ENCODE measurements at regions of chr4 and their contacts with region 1.

Region 1: GRCh38 chr4:82373816-82374625 is at the start of gene HNRNPD:
- DNase-seq: peak; percentile 98
- ATAC-seq: peak; percentile 91
- H3K4me3 Mint-ChIP-seq: peak within 1 kb of the TSS; percentile 87
- H3K27ac Mint-ChIP-seq: peak within 1 kb of the TSS; percentile 100
- H3K4me1 Mint-ChIP-seq: peaks cover 26% of the 10 kb centered on the region
- H3K27me3 Mint-ChIP-seq: no peaks in the 10 kb centered on the region
- CTCF ChIP-seq: no peak
- total RNA-seq, gene HNRNPD: 384 to 403 TPM

Region 2: GRCh38 chr4:82352913-82353366 is 21.1 kb before region 1 on chr4:
- CTCF ChIA-PET with region 1: interaction called, 4 read pairs
- POLR2A ChIA-PET with region 1: interaction called, 32 read pairs
- intact Hi-C with region 1: no loop called
- DNase-seq: no peak
- ATAC-seq: peak; percentile 61
- H3K4me3 Mint-ChIP-seq: no peak overlapping the region
- H3K27ac Mint-ChIP-seq: peak overlapping the region; percentile 85
- H3K4me1 Mint-ChIP-seq: peaks cover 60% of the 10 kb centered on the region
- H3K27me3 Mint-ChIP-seq: no peaks in the 10 kb centered on the region
- CTCF ChIP-seq: no peak

Region 3: GRCh38 chr4:82360298-82361177 is 13.5 kb before region 1 on chr4:
- CTCF ChIA-PET with region 1: interaction called, 25 read pairs
- POLR2A ChIA-PET with region 1: interaction called, 32 read pairs
- intact Hi-C with region 1: no loop called
- DNase-seq: no peak
- ATAC-seq: peak; percentile 59
- H3K4me3 Mint-ChIP-seq: no peak overlapping the region
- H3K27ac Mint-ChIP-seq: peak overlapping the region; percentile 77
- H3K4me1 Mint-ChIP-seq: peaks cover 82% of the 10 kb centered on the region
- H3K27me3 Mint-ChIP-seq: no peaks in the 10 kb centered on the region
- CTCF ChIP-seq: peak; percentile 67

Region 4: GRCh38 chr4:82423245-82424054 is 49.4 kb after region 1 on chr4:
- CTCF ChIA-PET with region 1: interaction called, 6 read pairs
- POLR2A ChIA-PET with region 1: interaction called, 193 read pairs
- intact Hi-C with region 1: loop called (anchors 2 kb)
- DNase-seq: no peak
- ATAC-seq: peak; percentile 46
- H3K4me3 Mint-ChIP-seq: no peak overlapping the region
- H3K27ac Mint-ChIP-seq: peak overlapping the region; percentile 52
- H3K4me1 Mint-ChIP-seq: peaks cover 44% of the 10 kb centered on the region
- H3K27me3 Mint-ChIP-seq: no peaks in the 10 kb centered on the region
- CTCF ChIP-seq: no peak

Region 5: GRCh38 chr4:82428969-82429727 is 55.1 kb after region 1 on chr4:
- CTCF ChIA-PET with region 1: interaction called, 7 read pairs
- POLR2A ChIA-PET with region 1: interaction called, 193 read pairs
- intact Hi-C with region 1: no loop called
- DNase-seq: peak; percentile 90
- ATAC-seq: peak; percentile 61
- H3K4me3 Mint-ChIP-seq: peak overlapping the region; percentile 97
- H3K27ac Mint-ChIP-seq: peak overlapping the region; percentile 99
- H3K4me1 Mint-ChIP-seq: peaks cover 53% of the 10 kb centered on the region
- H3K27me3 Mint-ChIP-seq: no peaks in the 10 kb centered on the region
- CTCF ChIP-seq: peak; percentile 89

Region 6: GRCh38 chr4:82900331-82901128 is 526.5 kb after region 1 on chr4 and contains the start of gene THAP9:
- CTCF ChIA-PET with region 1: no interaction called
- POLR2A ChIA-PET with region 1: interaction called, 5 read pairs
- intact Hi-C with region 1: loop called (anchors 10 kb)
- DNase-seq: peak; percentile 99
- ATAC-seq: peak; percentile 90
- H3K4me3 Mint-ChIP-seq: no peak within 1 kb of the TSS
- H3K27ac Mint-ChIP-seq: no peak within 1 kb of the TSS
- H3K4me1 Mint-ChIP-seq: peaks cover 47% of the 10 kb centered on the region
- H3K27me3 Mint-ChIP-seq: no peaks in the 10 kb centered on the region
- CTCF ChIP-seq: no peak
- total RNA-seq, gene THAP9: 3.5 to 4.4 TPM

Measured in activated CD8-positive, alpha-beta T cell treated with anti-CD3 and anti-CD28 coated beads for 36 hours (primary cell).